ENCODE measurements at regions of chr10 and their contacts with region 1.

Region 1: DNA sequence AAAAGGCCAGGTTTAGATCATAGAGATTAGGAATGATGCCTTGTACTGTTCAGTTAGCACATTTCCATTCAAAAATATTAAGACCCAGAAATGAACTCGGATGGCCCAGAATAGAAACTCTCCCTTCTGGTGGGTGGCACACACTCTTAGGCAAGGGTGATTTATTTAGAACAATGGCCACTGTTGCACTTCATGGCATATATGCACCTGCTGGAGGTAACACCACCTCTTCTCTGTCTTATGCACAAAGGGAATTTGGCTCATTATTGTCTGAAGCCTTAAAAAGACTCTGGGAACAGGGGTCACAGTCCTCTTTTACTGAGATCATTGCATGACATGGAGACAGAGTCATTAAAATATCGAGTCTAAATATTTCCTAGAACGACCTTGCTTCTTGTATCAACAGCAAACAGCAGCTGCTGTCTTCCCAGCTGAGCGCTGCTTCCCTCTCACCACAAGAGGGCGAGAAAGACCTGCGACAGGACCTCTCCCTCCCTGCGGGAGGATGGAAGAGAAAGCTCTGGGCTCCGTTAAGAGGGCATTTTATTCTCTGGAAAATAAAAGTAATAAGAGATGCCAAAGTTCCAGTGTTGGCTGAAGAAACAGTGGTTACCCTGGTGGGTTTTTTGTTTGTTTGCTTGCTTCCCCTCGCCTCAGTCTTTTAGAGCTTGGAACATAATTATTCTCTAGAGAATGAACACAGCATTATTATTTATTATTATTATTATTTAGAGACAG is 13.6 kb upstream of the BAMBI start:
- DNase-seq: peak; percentile 87

Region 2: DNA sequence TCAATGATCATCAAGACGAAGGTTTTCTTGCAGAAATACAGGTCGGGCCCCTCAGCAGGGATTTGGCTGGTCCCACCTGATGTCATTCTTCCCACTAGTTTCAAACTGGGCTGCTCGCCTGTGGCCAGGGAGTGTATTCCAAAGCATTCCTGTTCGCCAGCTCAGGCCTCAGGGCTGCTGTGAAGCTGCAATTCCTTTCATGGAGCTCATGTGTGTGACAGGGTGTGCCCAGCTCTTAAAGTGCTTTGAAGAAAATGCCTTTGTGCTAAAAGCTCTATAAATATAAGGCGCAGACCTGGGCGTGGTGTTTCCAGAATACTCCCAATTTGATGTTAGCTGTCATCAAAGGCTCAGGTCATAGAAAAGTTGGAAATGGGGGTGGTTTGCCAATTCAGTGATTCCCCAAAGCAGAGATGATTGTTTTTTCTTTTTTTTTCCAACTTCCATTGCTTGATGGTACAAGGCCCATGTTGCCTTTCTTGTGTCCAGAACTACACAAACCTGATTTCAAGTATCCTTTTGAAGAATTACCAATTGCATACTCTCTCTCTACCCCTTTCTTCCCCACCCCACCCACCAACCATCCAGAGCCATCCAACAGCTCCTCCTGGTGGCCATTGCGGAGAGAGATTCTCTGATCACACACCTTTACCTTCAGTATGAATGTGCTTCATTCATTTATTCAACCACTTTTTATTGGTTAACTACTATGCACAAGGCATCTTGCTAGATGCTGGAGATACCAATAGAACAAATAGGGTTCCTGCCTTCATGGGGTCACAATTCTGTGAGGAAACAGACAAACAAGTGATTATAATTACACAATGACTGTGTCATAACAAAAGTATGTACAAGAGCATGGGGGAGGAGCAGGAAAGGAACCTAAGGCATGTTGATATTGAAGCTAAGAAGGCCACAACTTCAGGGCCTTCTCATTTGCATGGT is 327.9 kb after region 1 on chr10:
- intact Hi-C with region 1: loop called (anchors 2 kb)
- DNase-seq: no peak

Region 3: DNA sequence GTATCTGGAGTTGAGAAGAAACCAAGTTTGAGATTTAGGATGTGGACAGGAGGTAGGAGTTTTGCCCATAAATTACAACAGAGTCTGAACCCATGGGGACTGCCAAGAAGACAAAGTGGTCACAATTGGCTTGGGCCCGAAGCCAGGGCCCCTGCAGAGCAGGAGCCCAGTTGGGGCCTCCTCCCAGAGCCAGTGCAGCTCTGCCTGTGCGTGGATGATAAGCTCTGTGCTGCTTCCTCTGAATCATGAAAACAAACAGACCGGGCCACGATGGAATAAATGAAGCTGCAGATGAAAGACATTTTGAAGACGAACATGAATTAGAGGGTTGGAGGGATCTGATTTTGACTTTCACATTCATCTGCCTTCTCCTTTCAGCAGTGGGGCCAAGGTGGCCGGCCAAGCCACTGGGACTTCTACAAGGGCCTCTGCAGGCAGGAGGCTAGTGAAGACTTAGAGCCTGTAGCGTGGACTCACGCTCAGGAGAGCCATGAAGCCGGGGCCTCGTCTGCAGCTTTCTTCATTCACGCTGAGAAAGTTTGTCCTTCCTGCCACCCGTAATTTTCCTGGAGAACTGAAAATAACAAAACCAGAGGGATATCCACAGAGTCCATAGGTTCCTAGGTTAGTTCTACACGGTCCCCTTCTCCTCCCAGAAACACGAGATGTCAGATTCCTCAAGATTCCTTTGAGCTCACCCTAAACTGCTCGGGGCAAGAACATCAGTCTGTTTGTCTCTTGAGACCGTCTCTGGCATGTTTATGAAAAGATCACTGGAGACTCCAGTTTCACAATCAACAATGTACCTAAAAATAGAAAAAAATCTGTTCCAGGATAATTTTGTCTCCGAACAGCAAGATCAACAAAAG is 468.4 kb after region 1 on chr10:
- intact Hi-C with region 1: loop called (anchors 5 kb)
- DNase-seq: no peak

Region 4: DNA sequence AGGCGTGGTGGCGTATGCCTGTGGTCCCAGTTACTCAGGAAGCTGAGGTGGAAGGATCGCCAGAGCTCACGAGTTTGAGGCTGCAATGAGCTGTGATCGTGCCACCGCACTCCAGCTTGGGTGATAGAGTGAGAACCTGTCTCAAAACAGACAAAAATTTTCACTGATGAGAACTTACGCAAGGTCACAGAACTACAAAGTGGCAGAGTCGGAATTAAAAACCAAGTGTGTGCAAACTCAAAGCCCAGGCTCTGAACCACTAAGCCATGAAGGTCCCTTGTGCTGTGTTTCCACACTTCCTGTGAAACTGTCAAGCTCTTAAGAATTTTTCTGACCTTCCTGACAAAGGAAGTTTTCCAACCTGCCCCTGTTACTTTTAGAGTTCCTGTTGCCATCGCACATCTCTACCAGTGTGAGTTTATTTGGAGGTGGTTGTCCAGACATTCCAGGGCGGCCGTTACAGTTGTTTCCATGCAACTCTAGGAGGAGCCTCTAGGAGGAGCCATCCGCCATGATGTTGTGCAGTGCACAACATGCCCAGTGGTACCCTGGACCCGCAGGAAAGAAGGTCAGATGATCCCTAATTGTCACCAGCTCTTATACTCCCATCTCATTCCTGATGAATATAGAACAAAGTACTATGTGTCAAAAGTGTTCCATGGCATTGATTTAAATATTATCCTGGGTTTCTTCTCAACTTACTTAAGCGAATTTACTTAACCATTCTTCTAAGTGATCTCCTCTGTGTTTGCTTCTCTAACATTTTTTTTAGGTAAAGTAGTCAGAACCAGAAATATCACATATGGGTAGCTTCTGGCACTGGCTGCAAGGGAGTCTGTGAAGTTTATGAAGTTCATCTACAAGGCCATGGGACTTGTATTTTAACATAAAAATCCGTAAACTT is 576.1 kb after region 1 on chr10:
- intact Hi-C with region 1: loop called (anchors 10 kb)
- DNase-seq: no peak

Region 5: GRCh38 chr10:29304264-29305030 is 640.7 kb after region 1 on chr10:
- intact Hi-C with region 1: loop called (anchors 2 kb)
- DNase-seq: no peak